Activated CD4-positive, alpha-beta memory T cell treated with anti-CD3 and anti-CD28 coated beads, Interleukin-2, amount 10 ng/mL, durations not matched to agents 7 days and 5 days (primary cell): ENCODE measurements at regions of chr7 and their contacts with region 1.

Region 1: DNA sequence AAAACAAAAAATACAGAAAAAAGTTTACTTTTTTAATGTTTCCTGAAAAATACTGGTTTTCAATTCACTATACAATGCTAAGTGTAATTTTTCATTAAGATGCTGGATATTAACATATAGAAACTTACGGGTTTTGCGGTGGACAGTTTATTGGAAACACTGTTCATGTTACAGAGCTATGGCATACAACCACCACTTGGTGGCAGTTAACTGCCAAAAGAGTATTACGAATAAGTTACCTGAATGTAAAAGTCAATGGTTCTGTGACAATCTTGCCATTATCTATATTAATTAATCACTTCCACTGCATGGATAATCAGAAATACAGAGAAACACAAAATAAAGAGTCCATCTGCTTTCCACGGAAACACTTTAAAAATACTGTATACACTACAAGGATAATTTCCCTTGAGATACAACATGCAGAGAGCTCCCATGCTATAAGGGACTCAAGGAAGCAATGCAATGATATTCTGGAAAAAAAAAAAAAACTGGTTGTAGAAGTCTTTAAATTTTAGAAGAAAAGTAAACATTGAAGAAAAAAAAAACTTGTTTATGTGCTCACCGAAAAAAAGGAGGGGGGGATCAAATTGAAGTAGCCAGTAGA is 97.0 kb downstream of the TPK1 start:
- DNase-seq: no peak
- H3K4me3 Mint-ChIP-seq: no peak overlapping the region
- H3K27ac Mint-ChIP-seq: no peak overlapping the region
- H3K4me1 Mint-ChIP-seq: peaks cover 2% of the 10 kb centered on the region
- H3K27me3 Mint-ChIP-seq: no peaks in the 10 kb centered on the region

Region 2: GRCh38 chr7:144728551-144728950 is 10.3 kb before region 1 on chr7:
- CTCF ChIA-PET with region 1: interaction called, 12 read pairs
- POLR2A ChIA-PET with region 1: no interaction called
- DNase-seq: no peak
- H3K4me3 Mint-ChIP-seq: no peak overlapping the region
- H3K27ac Mint-ChIP-seq: no peak overlapping the region
- H3K4me1 Mint-ChIP-seq: no peaks in the 10 kb centered on the region
- H3K27me3 Mint-ChIP-seq: no peaks in the 10 kb centered on the region